Endothelial cell of umbilical vein (primary cell): ENCODE measurements at regions of chr5 and their contacts with region 1.

Region 1: GRCh38 chr5:122192497-122193496 is 63.5 kb downstream of the ZNF474 start:
- DNase-seq: peak; percentile 76
- H3K4me3 ChIP-seq: no peak overlapping the region
- H3K27ac ChIP-seq: no peak overlapping the region
- H3K4me1 ChIP-seq: peaks cover 6% of the 10 kb centered on the region
- H3K27me3 ChIP-seq: peaks cover under 1 to 3% of the 10 kb centered on the region in 2 experiments
- CTCF ChIP-seq: peak; percentile 51 to 58
- POLR2A ChIP-seq: no peak

Region 2: GRCh38 chr5:122156724-122157325 is 36.0 kb before region 1 on chr5:
- CTCF ChIA-PET with region 1: interaction called, 12 read pairs
- POLR2A ChIA-PET with region 1: no interaction called
- dilution Hi-C with region 1: no loop called
- intact Hi-C with region 1: no loop called
- DNase-seq: peak; percentile 42
- H3K4me3 ChIP-seq: no peak overlapping the region
- H3K27ac ChIP-seq: no peak overlapping the region
- H3K4me1 ChIP-seq: peaks cover 8% of the 10 kb centered on the region
- H3K27me3 ChIP-seq: no peaks in the 10 kb centered on the region
- CTCF ChIP-seq: peak in 1 of 2 donors; percentile 19
- POLR2A ChIP-seq: no peak

Region 3: DNA sequence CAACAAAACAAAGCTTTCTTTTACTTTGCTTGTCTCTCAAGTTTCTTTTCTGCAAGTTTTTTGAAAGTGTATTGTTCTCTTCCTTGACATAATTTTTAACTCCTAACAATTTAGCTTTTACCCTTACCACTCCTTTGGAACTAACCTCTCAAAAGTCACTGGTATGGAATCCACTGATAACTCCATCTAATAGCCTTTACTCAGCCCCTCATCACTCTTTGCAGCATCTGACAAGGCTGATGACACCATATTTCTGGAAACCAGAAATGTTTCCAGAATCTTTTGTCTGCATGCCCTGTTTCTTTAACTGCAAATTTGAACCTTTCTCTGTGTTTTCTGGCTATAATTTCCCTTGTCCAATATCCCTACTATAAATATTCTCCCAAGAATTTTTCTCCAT is 16.9 kb before region 1 on chr5:
- CTCF ChIA-PET with region 1: interaction called, 12 read pairs
- POLR2A ChIA-PET with region 1: no interaction called
- dilution Hi-C with region 1: no loop called
- intact Hi-C with region 1: no loop called
- DNase-seq: no peak
- H3K4me3 ChIP-seq: no peak overlapping the region
- H3K27ac ChIP-seq: no peak overlapping the region
- H3K4me1 ChIP-seq: peaks cover 5% of the 10 kb centered on the region
- H3K27me3 ChIP-seq: no peaks in the 10 kb centered on the region
- CTCF ChIP-seq: no peak
- POLR2A ChIP-seq: no peak

Region 4: GRCh38 chr5:122311961-122312590 is 119.3 kb after region 1 on chr5 and contains the start of gene SNCAIP:
- CTCF ChIA-PET with region 1: interaction called, 5 read pairs
- POLR2A ChIA-PET with region 1: no interaction called
- dilution Hi-C with region 1: no loop called
- intact Hi-C with region 1: loop called (anchors 2 kb)
- DNase-seq: peak; percentile 58
- H3K4me3 ChIP-seq: peak within 1 kb of the TSS; percentile 59 to 89 (median 81)
- H3K27ac ChIP-seq: peak within 1 kb of the TSS; percentile 62
- H3K4me1 ChIP-seq: peaks cover 25% of the 10 kb centered on the region
- H3K27me3 ChIP-seq: no peaks in the 10 kb centered on the region
- CTCF ChIP-seq: no peak
- POLR2A ChIP-seq: no peak
- total RNA-seq, gene SNCAIP: 35.9 and 42.0 TPM in 2 replicates

Region 5: GRCh38 chr5:122492664-122493063 is 299.9 kb after region 1 on chr5:
- CTCF ChIA-PET with region 1: interaction called, 8 read pairs
- POLR2A ChIA-PET with region 1: no interaction called
- dilution Hi-C with region 1: no loop called
- intact Hi-C with region 1: loop called (anchors 1 kb)
- DNase-seq: no peak
- H3K4me3 ChIP-seq: no peak overlapping the region
- H3K27ac ChIP-seq: no peak overlapping the region
- H3K4me1 ChIP-seq: no peaks in the 10 kb centered on the region
- H3K27me3 ChIP-seq: no peaks in the 10 kb centered on the region
- CTCF ChIP-seq: peak in 1 of 2 donors; percentile 2
- POLR2A ChIP-seq: no peak

Region 6: DNA sequence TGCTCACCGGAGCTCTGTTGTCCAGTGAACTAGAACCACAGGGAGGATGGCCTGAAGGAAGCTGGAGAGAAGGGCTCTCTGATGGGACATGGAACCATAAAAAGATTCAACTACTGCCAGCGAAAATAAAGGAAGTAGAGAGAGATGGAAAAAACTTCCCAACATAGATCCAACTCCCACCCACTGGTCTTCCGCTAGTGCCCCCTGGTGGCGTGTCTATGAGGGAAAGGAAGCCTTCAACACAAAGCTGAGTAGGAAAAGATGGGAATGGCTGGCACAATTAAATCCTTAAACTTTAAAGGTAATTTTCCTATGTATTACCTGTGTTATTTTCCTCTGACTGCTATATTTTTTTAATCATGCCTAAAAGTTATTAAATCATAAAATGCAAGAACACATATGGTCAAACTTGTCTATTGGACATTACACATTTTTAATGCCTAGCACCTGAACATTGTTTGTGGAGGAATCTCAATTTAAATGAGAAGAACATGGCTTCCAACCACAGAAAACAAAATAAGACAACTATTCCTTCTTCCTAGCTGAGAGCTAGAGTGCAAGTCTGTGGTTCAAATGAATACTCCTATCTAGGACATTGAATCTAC is 1178.9 kb after region 1 on chr5:
- CTCF ChIA-PET with region 1: interaction called, 12 read pairs
- POLR2A ChIA-PET with region 1: no interaction called
- dilution Hi-C with region 1: no loop called
- intact Hi-C with region 1: no loop called
- DNase-seq: no peak
- H3K4me3 ChIP-seq: no peak overlapping the region
- H3K27ac ChIP-seq: no peak overlapping the region
- H3K4me1 ChIP-seq: no peaks in the 10 kb centered on the region
- H3K27me3 ChIP-seq: no peaks in the 10 kb centered on the region
- CTCF ChIP-seq: peak; percentile 40 to 49
- POLR2A ChIP-seq: no peak